Gastrocnemius medialis (tissue), 4 donors: ENCODE measurements at regions of chr4 and their contacts with region 1.

Region 1: DNA sequence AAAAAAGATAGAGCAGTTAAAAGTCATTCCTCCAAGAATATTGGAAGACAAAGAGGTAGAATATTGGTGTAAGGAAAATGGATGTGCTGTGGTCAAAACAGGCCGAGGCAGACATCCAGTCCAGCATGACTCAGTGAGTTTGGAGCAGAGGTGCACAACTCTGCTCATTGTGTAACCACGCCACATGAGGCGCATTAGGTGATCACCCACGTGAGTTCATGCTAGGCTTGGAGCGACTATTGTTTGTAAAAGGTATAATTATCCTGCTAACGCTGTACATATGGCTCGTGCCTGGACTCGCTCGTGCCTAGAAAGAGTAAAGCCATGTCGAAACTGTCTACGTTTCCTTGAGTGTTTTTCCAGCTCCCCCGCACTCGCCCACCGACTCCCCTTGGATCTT is 23.9 kb downstream of the C4orf54 start:
- DNase-seq: peak; percentile 86 to 87
- ATAC-seq: peak; percentile 85 to 87
- H3K4me3 ChIP-seq: no peak overlapping the region
- H3K27ac ChIP-seq: peak overlapping the region; percentile 75 to 99 (median 98)
- H3K4me1 ChIP-seq: peaks cover 45 to 68% of the 10 kb centered on the region in 2 donors
- H3K27me3 ChIP-seq: no peaks in the 10 kb centered on the region
- CTCF ChIP-seq: peak in 1 of 5 experiments; percentile 8
- POLR2A ChIP-seq: no peak

Region 2: GRCh38 chr4:99723612-99724011 is 89.8 kb after region 1 on chr4:
- in situ Hi-C with region 1: no loop called
- intact Hi-C with region 1: loop called (anchors 5 kb)
- DNase-seq: peak; percentile 83 to 94
- ATAC-seq: peak; percentile 97 to 98
- H3K4me3 ChIP-seq: no peak overlapping the region
- H3K27ac ChIP-seq: peak overlapping the region; percentile 89 to 95 (median 91)
- H3K4me1 ChIP-seq: peaks cover 38 to 48% of the 10 kb centered on the region in 2 donors
- H3K27me3 ChIP-seq: no peaks in the 10 kb centered on the region
- CTCF ChIP-seq: no peak
- POLR2A ChIP-seq: no peak

Region 3: GRCh38 chr4:99949034-99949998 is 315.5 kb after region 1 on chr4:
- in situ Hi-C with region 1: no loop called
- intact Hi-C with region 1: loop called (anchors 5 kb)
- DNase-seq: peak; percentile 81 to 89
- ATAC-seq: peak; percentile 56 to 67
- H3K4me3 ChIP-seq: peak overlapping the region; percentile 79 to 95 (median 86)
- H3K27ac ChIP-seq: peak overlapping the region; percentile 96 to 98 (median 98)
- H3K4me1 ChIP-seq: peaks cover 30 to 40% of the 10 kb centered on the region in 2 donors
- H3K27me3 ChIP-seq: no peaks in the 10 kb centered on the region
- CTCF ChIP-seq: peak; percentile 73 to 93 (median 80)
- POLR2A ChIP-seq: no peak